MCF 10A (cell line): ENCODE measurements at regions of chr1 and their contacts with region 1.

Region 1: DNA sequence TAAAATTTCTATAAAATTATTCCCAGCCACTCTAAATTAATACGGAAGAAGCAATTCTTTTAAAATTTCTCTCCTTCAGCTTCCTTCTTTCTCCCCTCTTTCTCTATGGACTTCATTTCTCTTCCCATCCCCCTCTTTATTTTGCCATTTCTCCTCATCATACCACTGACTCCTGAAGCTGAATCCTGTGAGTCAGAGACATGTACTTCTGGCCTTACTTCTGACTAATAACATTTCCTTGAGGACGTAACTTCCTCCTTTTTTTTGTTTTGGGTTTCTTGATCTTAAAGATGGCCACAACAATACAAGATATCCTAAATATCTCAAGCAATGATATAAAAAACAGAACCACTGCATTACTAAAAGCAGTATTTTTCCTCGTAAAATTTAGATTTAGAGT is 63.6 kb upstream of the DENND1B start:
- DNase-seq: peak; percentile 85
- H3K4me3 Mint-ChIP-seq: no peak overlapping the region
- H3K27ac Mint-ChIP-seq: peak overlapping the region; percentile 57
- H3K4me1 Mint-ChIP-seq: peaks cover 7% of the 10 kb centered on the region
- H3K27me3 Mint-ChIP-seq: no peaks in the 10 kb centered on the region
- CTCF ChIP-seq: no peak

Region 2: DNA sequence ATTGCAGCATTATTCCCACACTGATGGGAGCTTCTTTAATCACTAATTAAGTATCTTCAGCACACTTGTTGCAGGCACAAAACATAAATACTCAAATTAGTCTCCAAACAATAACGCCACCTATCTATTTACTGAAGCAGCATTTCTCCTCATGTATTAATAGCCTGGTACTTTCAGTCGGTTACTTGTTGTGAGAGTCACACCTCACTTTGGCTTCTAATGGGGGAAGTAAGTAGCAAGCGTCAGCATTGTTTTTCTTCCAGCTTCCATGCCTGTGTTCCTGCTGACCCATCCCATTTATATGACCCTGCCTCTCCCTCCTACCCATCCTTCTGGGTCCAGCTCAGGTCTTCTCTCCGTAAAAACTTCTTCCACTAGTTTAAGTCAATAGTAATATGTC is 31.6 kb before region 1 on chr1:
- CTCF ChIA-PET with region 1: interaction called, 10 read pairs
- POLR2A ChIA-PET with region 1: no interaction called
- intact Hi-C with region 1: no loop called
- DNase-seq: no peak
- H3K4me3 Mint-ChIP-seq: no peak overlapping the region
- H3K27ac Mint-ChIP-seq: no peak overlapping the region
- H3K4me1 Mint-ChIP-seq: no peaks in the 10 kb centered on the region
- H3K27me3 Mint-ChIP-seq: no peaks in the 10 kb centered on the region
- CTCF ChIP-seq: no peak

Region 3: GRCh38 chr1:197884173-197884572 is 45.3 kb after region 1 on chr1:
- CTCF ChIA-PET with region 1: no interaction called
- POLR2A ChIA-PET with region 1: no interaction called
- intact Hi-C with region 1: no loop called
- DNase-seq: no peak
- H3K4me3 Mint-ChIP-seq: no peak overlapping the region
- H3K27ac Mint-ChIP-seq: no peak overlapping the region
- H3K4me1 Mint-ChIP-seq: no peaks in the 10 kb centered on the region
- H3K27me3 Mint-ChIP-seq: no peaks in the 10 kb centered on the region
- CTCF ChIP-seq: no peak

Region 4: DNA sequence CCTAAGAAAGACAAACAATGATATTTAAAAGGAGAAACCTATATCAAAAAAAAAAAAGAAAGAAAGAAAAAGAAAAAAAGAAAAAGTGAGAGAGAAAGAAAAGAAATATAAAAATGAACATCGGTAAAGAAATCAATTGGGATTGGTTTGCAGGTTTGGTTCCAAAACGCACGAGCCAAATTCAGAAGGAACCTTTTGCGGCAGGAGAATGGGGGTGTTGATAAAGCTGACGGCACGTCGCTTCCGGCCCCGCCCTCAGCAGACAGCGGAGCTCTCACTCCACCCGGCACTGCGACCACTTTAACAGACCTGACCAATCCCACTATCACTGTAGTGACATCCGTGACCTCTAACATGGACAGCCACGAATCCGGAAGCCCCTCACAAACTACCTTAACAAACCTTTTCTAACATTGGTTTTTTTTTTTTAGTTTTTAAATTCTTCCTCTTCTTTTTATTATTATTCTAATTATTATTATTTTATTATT is 90.1 kb after region 1 on chr1:
- CTCF ChIA-PET with region 1: no interaction called
- POLR2A ChIA-PET with region 1: no interaction called
- intact Hi-C with region 1: no loop called
- DNase-seq: no peak
- H3K4me3 Mint-ChIP-seq: no peak overlapping the region
- H3K27ac Mint-ChIP-seq: no peak overlapping the region
- H3K4me1 Mint-ChIP-seq: peaks cover 5% of the 10 kb centered on the region
- H3K27me3 Mint-ChIP-seq: no peaks in the 10 kb centered on the region
- CTCF ChIP-seq: no peak